CD8-positive, alpha-beta T cell (primary cell): ENCODE measurements at regions of chr2 and their contacts with region 1.

Region 1: GRCh38 chr2:120680136-120680761 is 55.4 kb upstream of the GLI2 start:
- DNase-seq: peak; percentile 39 to 85 (median 70)
- ATAC-seq: peak; percentile 73
- H3K4me3 ChIP-seq: no peak overlapping the region
- H3K4me3 Mint-ChIP-seq: no peak overlapping the region
- H3K27ac ChIP-seq: no peak overlapping the region
- H3K27ac Mint-ChIP-seq: peak overlapping the region; percentile 14
- H3K4me1 ChIP-seq: no peaks in the 10 kb centered on the region
- H3K4me1 Mint-ChIP-seq: peaks cover 2% of the 10 kb centered on the region
- H3K27me3 ChIP-seq: no peaks in the 10 kb centered on the region
- H3K27me3 Mint-ChIP-seq: peaks cover 23% of the 10 kb centered on the region
- CTCF ChIP-seq: no peak

Region 2: GRCh38 chr2:119198240-119198840 is 1481.9 kb before region 1 on chr2:
- CTCF ChIA-PET with region 1: no interaction called
- POLR2A ChIA-PET with region 1: no interaction called
- intact Hi-C with region 1: no loop called
- DNase-seq: no peak
- ATAC-seq: no peak
- H3K4me3 ChIP-seq: no peak overlapping the region
- H3K4me3 Mint-ChIP-seq: no peak overlapping the region
- H3K27ac ChIP-seq: no peak overlapping the region
- H3K27ac Mint-ChIP-seq: no peak overlapping the region
- H3K4me1 ChIP-seq: no peaks in the 10 kb centered on the region
- H3K4me1 Mint-ChIP-seq: no peaks in the 10 kb centered on the region
- H3K27me3 ChIP-seq: no peaks in the 10 kb centered on the region
- H3K27me3 Mint-ChIP-seq: peaks cover 10% of the 10 kb centered on the region
- CTCF ChIP-seq: no peak

Region 3: GRCh38 chr2:119419803-119420508 is 1260.3 kb before region 1 on chr2:
- CTCF ChIA-PET with region 1: no interaction called
- POLR2A ChIA-PET with region 1: no interaction called
- intact Hi-C with region 1: loop called in 1 of 2 experiments (anchors 10 kb)
- DNase-seq: no peak
- ATAC-seq: no peak
- H3K4me3 ChIP-seq: no peak overlapping the region
- H3K4me3 Mint-ChIP-seq: no peak overlapping the region
- H3K27ac ChIP-seq: no peak overlapping the region
- H3K27ac Mint-ChIP-seq: no peak overlapping the region
- H3K4me1 ChIP-seq: no peaks in the 10 kb centered on the region
- H3K4me1 Mint-ChIP-seq: no peaks in the 10 kb centered on the region
- H3K27me3 ChIP-seq: no peaks in the 10 kb centered on the region
- H3K27me3 Mint-ChIP-seq: peaks cover 19% of the 10 kb centered on the region
- CTCF ChIP-seq: no peak

Region 4: GRCh38 chr2:119702918-119703401 is 977.3 kb before region 1 on chr2:
- CTCF ChIA-PET with region 1: interaction called, 4 read pairs
- POLR2A ChIA-PET with region 1: no interaction called
- intact Hi-C with region 1: loop called in 1 of 2 experiments (anchors 1 kb)
- DNase-seq: peak; percentile 27 to 80 (median 71)
- ATAC-seq: peak; percentile 87
- H3K4me3 ChIP-seq: no peak overlapping the region
- H3K4me3 Mint-ChIP-seq: no peak overlapping the region
- H3K27ac ChIP-seq: no peak overlapping the region
- H3K27ac Mint-ChIP-seq: no peak overlapping the region
- H3K4me1 ChIP-seq: peaks cover 12% of the 10 kb centered on the region
- H3K4me1 Mint-ChIP-seq: peaks cover 12% of the 10 kb centered on the region
- H3K27me3 ChIP-seq: peaks cover 0 to 2% of the 10 kb centered on the region in 2 experiments
- H3K27me3 Mint-ChIP-seq: no peaks in the 10 kb centered on the region
- CTCF ChIP-seq: peak; percentile 92

Region 5: DNA sequence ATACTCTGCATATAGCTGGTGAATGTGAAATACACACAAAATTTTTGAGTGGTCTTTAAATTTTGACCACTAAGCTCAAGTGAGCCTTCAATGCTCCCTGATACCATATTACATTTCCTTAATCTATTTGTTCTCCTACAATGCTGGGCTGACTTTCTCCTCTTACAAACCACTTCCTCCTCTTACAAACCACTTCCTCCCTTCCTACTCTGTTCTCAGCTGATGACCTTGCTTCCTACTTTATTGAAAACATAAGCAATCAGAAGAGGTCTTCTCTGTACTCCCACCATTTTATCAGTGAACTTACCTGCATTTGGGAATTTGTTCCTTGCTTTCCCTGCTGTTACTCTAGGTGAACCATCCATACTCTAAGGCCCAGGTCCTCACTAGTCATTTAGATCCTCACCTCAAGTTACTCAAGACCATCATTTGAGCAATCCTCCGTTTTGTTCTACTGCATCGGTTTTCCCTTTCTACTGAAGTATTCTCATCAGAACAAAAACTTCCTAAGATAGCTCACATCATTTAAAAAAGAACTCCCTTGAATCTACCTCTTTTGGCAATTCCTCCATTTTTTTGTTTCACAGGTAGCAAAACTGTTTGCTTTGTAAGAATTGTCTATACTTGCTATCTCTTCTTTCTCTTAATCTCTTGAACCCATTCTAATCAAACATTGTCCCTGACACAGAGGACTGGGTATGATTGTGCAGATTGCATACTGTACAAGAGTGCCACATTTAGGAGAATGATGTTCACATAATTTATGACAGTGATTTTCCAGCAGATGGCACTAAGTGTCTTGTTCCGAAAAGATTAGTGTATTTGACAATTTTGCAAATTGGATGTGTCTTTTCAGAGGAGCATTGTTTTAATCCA is 570.8 kb before region 1 on chr2:
- CTCF ChIA-PET with region 1: interaction called, 4 read pairs
- POLR2A ChIA-PET with region 1: no interaction called
- intact Hi-C with region 1: loop called (anchors 2 to 5 kb)
- DNase-seq: peak in 2 of 9 experiments; percentile 37 to 68
- ATAC-seq: peak; percentile 73
- H3K4me3 ChIP-seq: peak overlapping the region in 1 of 2 experiments; percentile 12
- H3K4me3 Mint-ChIP-seq: peak overlapping the region; percentile 72
- H3K27ac ChIP-seq: peak overlapping the region; percentile 1 to 33
- H3K27ac Mint-ChIP-seq: peak overlapping the region; percentile 81
- H3K4me1 ChIP-seq: peaks cover 21% of the 10 kb centered on the region
- H3K4me1 Mint-ChIP-seq: peaks cover 30% of the 10 kb centered on the region
- H3K27me3 ChIP-seq: no peaks in the 10 kb centered on the region
- H3K27me3 Mint-ChIP-seq: no peaks in the 10 kb centered on the region
- CTCF ChIP-seq: peak; percentile 66

Region 6: DNA sequence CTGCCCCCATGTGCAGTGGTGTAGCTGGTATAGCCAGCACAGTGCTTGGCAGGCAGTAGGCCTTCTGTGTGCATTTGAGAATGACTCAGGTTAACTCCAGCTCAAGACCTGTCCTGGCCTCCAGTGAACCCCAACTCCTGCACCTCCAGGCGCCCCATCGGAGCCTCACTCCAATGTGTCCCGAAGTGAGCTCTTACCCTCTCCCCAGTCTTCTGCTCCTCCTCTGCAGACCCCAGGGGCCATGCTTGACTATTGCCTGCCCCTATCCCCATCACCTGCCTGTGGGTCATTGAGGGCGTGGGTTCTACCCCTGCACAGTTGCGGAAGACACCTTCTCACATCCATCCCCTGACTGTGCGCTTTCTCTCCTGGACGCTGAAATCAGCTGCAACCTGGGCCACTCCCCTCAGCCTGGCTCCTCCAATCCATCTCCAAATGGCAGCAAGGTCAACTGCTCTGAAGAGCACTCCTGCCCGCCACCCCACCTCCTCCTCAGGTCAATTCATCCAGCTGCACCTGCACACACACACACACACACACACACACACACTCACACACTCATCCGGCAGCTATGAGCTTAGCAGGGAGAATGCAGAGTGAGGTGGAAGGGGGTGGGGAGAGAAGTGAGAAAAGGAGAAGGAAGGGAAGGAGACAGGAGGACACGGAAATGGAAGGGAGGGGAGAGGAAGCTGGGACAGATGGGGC is 74.9 kb before region 1 on chr2:
- CTCF ChIA-PET with region 1: no interaction called
- POLR2A ChIA-PET with region 1: no interaction called
- intact Hi-C with region 1: no loop called
- DNase-seq: no peak
- ATAC-seq: no peak
- H3K4me3 ChIP-seq: no peak overlapping the region
- H3K4me3 Mint-ChIP-seq: no peak overlapping the region
- H3K27ac ChIP-seq: no peak overlapping the region
- H3K27ac Mint-ChIP-seq: no peak overlapping the region
- H3K4me1 ChIP-seq: no peaks in the 10 kb centered on the region
- H3K4me1 Mint-ChIP-seq: no peaks in the 10 kb centered on the region
- H3K27me3 ChIP-seq: no peaks in the 10 kb centered on the region
- H3K27me3 Mint-ChIP-seq: peaks cover 19% of the 10 kb centered on the region
- CTCF ChIP-seq: no peak

Region 7: GRCh38 chr2:120669121-120669952 is 10.9 kb before region 1 on chr2:
- CTCF ChIA-PET with region 1: interaction called, 16 read pairs
- POLR2A ChIA-PET with region 1: no interaction called
- intact Hi-C with region 1: no loop called
- DNase-seq: no peak
- ATAC-seq: no peak
- H3K4me3 ChIP-seq: no peak overlapping the region
- H3K4me3 Mint-ChIP-seq: no peak overlapping the region
- H3K27ac ChIP-seq: no peak overlapping the region
- H3K27ac Mint-ChIP-seq: no peak overlapping the region
- H3K4me1 ChIP-seq: no peaks in the 10 kb centered on the region
- H3K4me1 Mint-ChIP-seq: no peaks in the 10 kb centered on the region
- H3K27me3 ChIP-seq: no peaks in the 10 kb centered on the region
- H3K27me3 Mint-ChIP-seq: peaks cover 18% of the 10 kb centered on the region
- CTCF ChIP-seq: no peak